ENCODE measurements at regions of chr19 and their contacts with region 1.

Region 1: DNA sequence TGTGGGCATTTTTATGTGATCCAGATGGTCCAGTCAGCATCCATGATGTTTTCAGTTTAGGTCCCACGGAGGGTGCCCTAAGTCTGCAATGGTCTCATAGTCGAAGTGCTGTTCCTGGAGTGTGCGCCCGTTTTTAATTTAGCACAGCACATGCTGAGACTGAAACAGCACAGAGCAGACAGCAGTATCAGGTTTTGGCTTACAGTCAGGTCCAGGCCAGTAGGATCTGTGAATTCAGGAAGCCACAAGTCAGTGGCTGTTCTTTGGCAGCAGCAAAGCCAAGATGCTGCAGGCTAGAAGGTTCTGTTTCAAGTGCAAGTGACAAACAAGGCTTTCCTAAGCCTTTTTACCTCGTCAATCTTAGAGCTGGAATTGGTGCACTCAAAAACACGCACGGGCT is 18.3 kb downstream of the FBXO27 start:
- DNase-seq: no peak
- ATAC-seq: peak; percentile 22 to 43; a peak in 3 of 6 replicates
- H3K4me3 ChIP-seq: no peak overlapping the region
- H3K27ac ChIP-seq: no peak overlapping the region
- H3K4me1 ChIP-seq: no peaks in the 10 kb centered on the region
- CTCF ChIP-seq: no peak
- EP300 ChIP-seq: no peak
- POLR2A ChIP-seq: no peak
- RAD21 ChIP-seq: no peak

Region 2: DNA sequence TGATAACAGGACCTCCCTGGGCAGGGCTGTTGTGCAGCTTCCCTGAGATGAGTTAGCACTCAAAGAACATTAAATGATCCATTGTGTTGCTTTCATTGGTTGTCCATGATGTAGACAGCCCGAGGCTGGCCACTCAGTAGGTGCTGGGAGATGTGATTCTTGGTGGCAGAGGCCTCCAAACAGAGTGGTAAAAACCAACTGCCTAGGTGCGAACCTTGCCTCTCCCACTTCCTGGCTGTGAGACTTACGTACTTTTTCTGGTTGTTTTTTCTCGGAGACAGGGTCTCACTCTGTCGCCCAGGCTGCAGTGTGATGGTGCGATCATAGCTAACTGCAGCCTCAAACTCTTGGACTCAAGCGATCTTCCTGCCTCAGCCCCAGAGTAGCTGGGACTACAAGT is 89.6 kb before region 1 on chr19:
- CTCF ChIA-PET with region 1: no interaction called
- POLR2A ChIA-PET with region 1: no interaction called
- DNase-seq: no peak
- ATAC-seq: no peak
- H3K4me3 ChIP-seq: no peak overlapping the region
- H3K27ac ChIP-seq: no peak overlapping the region
- H3K4me1 ChIP-seq: peaks cover 4% of the 10 kb centered on the region; the same call in 2 of the 3 replicates
- CTCF ChIP-seq: no peak
- EP300 ChIP-seq: no peak
- POLR2A ChIP-seq: no peak
- RAD21 ChIP-seq: no peak

Region 3: DNA sequence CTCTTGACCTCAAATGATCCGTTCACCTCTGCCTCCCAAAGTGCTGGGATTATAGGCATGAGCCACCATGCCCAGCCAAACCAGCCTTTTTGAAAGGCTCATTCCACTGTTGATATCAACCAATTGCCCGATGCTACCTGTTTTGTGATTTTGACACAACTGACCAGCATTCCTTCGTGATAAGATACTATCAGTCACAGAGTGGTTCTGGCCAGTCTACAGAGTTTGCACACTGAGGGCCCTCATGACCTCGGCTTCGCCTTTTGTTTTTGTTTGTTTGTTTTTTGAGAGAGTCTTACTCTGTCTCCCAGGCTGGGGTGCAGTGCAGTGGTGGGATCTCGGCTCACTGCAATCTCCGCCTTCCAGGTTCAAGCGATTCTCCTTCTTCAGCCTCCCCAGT is 19.4 kb before region 1 on chr19:
- CTCF ChIA-PET with region 1: interaction called, 18 read pairs
- POLR2A ChIA-PET with region 1: no interaction called
- DNase-seq: no peak
- ATAC-seq: no peak
- H3K4me3 ChIP-seq: no peak overlapping the region
- H3K27ac ChIP-seq: no peak overlapping the region
- H3K4me1 ChIP-seq: peaks cover 26% of the 10 kb centered on the region
- CTCF ChIP-seq: no peak
- EP300 ChIP-seq: no peak
- POLR2A ChIP-seq: no peak
- RAD21 ChIP-seq: no peak

Measured in A549 (cell line).